Activated CD4-positive, alpha-beta T cell treated with anti-CD3 and anti-CD28 coated beads for 36 hours (primary cell): ENCODE measurements at regions of chr3 and their contacts with region 1.

Region 1: GRCh38 chr3:188697127-188697526 is 474.6 kb upstream of the TPRG1 start:
- DNase-seq: peak; percentile 54
- ATAC-seq: peak; percentile 42
- H3K4me3 Mint-ChIP-seq: no peak overlapping the region
- H3K27ac Mint-ChIP-seq: no peak overlapping the region
- H3K4me1 Mint-ChIP-seq: peaks cover 47% of the 10 kb centered on the region
- H3K27me3 Mint-ChIP-seq: peaks cover 2% of the 10 kb centered on the region

Region 2: GRCh38 chr3:188294823-188295487 is 402.2 kb before region 1 on chr3:
- CTCF ChIA-PET with region 1: no interaction called
- POLR2A ChIA-PET with region 1: interaction called, 3 read pairs
- intact Hi-C with region 1: loop called in 1 of 2 experiments (anchors 5 kb)
- DNase-seq: peak; percentile 29
- ATAC-seq: peak; percentile 37
- H3K4me3 Mint-ChIP-seq: no peak overlapping the region
- H3K27ac Mint-ChIP-seq: peak overlapping the region; percentile 69
- H3K4me1 Mint-ChIP-seq: peaks cover 74% of the 10 kb centered on the region
- H3K27me3 Mint-ChIP-seq: no peaks in the 10 kb centered on the region

Region 3: DNA sequence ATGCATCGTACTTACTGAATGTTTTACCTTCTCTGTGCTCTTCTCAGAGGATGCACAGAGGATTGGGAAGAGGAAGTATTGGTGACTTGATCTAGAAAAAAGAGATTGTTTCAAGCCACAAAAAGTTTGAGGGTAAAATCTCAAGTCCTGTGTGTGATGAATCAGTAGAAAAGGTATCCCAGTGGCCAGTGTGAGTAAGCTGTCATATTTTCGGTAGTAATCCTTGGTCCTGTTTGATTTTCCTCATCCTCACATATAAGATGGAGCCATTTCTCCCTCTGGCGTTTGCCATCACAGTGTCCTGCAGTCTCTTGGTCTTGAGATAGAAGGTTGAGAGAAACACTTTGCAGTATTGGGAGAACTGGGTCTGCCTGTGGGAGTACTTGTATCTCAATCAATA is 376.4 kb before region 1 on chr3:
- CTCF ChIA-PET with region 1: no interaction called
- POLR2A ChIA-PET with region 1: interaction called, 3 read pairs
- intact Hi-C with region 1: loop called in 1 of 2 experiments (anchors 5 kb)
- DNase-seq: no peak
- ATAC-seq: no peak
- H3K4me3 Mint-ChIP-seq: no peak overlapping the region
- H3K27ac Mint-ChIP-seq: no peak overlapping the region
- H3K4me1 Mint-ChIP-seq: peaks cover 63% of the 10 kb centered on the region
- H3K27me3 Mint-ChIP-seq: peaks cover 3% of the 10 kb centered on the region

Region 4: GRCh38 chr3:188683032-188683521 is 14.1 kb before region 1 on chr3:
- CTCF ChIA-PET with region 1: interaction called, 4 read pairs
- POLR2A ChIA-PET with region 1: no interaction called
- intact Hi-C with region 1: loop called (anchors 1 kb)
- DNase-seq: peak; percentile 69
- ATAC-seq: peak; percentile 97
- H3K4me3 Mint-ChIP-seq: no peak overlapping the region
- H3K27ac Mint-ChIP-seq: no peak overlapping the region
- H3K4me1 Mint-ChIP-seq: peaks cover 41% of the 10 kb centered on the region
- H3K27me3 Mint-ChIP-seq: no peaks in the 10 kb centered on the region

Region 5: GRCh38 chr3:188749010-188749617 is 52.0 kb after region 1 on chr3:
- CTCF ChIA-PET with region 1: interaction called, 5 read pairs
- POLR2A ChIA-PET with region 1: no interaction called
- intact Hi-C with region 1: loop called (anchors 1 kb)
- DNase-seq: peak; percentile 59
- ATAC-seq: no peak
- H3K4me3 Mint-ChIP-seq: no peak overlapping the region
- H3K27ac Mint-ChIP-seq: no peak overlapping the region
- H3K4me1 Mint-ChIP-seq: peaks cover 30% of the 10 kb centered on the region
- H3K27me3 Mint-ChIP-seq: no peaks in the 10 kb centered on the region